ENCODE measurements at regions of chr13 and their contacts with region 1.

Region 1: DNA sequence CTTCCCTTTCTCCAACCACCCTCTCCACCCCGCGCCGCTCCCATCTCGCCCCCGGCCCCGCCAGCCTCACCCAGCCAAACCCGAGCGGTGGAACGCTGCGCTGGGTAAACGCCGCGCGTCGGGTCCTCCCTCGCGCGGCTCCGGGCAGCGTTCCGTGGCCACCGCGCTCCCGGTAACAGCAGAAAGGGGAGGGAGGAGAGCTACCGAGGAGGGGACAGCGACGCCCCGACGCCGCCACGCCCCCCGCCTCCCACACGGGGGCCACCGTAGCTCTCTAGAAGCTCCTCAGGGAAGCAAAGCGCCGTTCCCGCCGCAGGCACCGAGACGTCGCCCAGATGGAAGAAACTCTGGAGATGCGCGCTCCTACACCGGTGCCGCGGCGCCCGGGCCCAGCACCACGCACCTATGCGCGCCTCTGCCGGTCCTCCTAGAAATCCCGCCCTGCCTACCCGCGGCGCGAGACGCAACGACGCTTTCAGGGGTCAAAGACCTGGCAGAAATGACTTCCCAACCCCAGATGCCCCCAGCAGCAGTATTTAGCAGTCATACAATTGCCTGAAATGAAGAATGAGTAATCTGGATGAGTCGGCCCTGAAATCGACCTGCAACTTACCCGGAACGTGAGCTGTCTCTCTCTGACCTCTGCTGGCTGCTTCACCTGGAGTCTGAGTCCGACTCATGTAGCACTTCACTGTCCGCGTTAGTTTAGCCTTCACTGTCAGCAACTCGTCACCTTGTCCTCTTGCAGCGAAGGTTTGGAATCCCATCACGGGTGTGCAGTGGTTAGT is at the start of gene RUBCNL:
- DNase-seq: peak in 2 of 4 experiments; percentile 8 to 13
- ATAC-seq: peak; percentile 38; the same call in 2 of the 3 replicates
- H3K4me3 ChIP-seq: no peak within 1 kb of the TSS
- H3K27ac ChIP-seq: no peak within 1 kb of the TSS
- H3K4me1 ChIP-seq: peaks cover 0 to 6% of the 10 kb centered on the region in 2 experiments; a peak in 2 of 5 replicates
- H3K27me3 ChIP-seq: peaks cover 16 to 23% of the 10 kb centered on the region in 2 experiments; a peak in 4 of 5 replicates
- CTCF ChIP-seq: no peak
- EP300 ChIP-seq: no peak
- POLR2A ChIP-seq: no peak
- RAD21 ChIP-seq: no peak
- polyA plus RNA-seq, gene RUBCNL: 0.08 TPM

Region 2: GRCh38 chr13:46463719-46464118 is 76.5 kb after region 1 on chr13:
- CTCF ChIA-PET with region 1: no interaction called
- POLR2A ChIA-PET with region 1: no interaction called
- in situ Hi-C with region 1: no loop called
- intact Hi-C with region 1: loop called (anchors 10 kb)
- DNase-seq: no peak
- ATAC-seq: no peak
- H3K4me3 ChIP-seq: no peak overlapping the region
- H3K27ac ChIP-seq: no peak overlapping the region
- H3K4me1 ChIP-seq: no peaks in the 10 kb centered on the region; a peak in 1 of 5 replicates
- H3K27me3 ChIP-seq: no peaks in the 10 kb centered on the region
- CTCF ChIP-seq: no peak
- EP300 ChIP-seq: no peak
- POLR2A ChIP-seq: no peak
- RAD21 ChIP-seq: no peak

Region 3: GRCh38 chr13:46492946-46493345 is 105.7 kb after region 1 on chr13:
- CTCF ChIA-PET with region 1: no interaction called
- POLR2A ChIA-PET with region 1: no interaction called
- in situ Hi-C with region 1: no loop called
- intact Hi-C with region 1: no loop called
- DNase-seq: peak; percentile 13 to 41 (median 16)
- ATAC-seq: no peak
- H3K4me3 ChIP-seq: no peak overlapping the region
- H3K27ac ChIP-seq: no peak overlapping the region
- H3K4me1 ChIP-seq: no peaks in the 10 kb centered on the region
- H3K27me3 ChIP-seq: peaks cover 0 to 9% of the 10 kb centered on the region in 2 experiments; a peak in 1 of 5 replicates
- CTCF ChIP-seq: peak; percentile 19 to 62 (median 40); a peak in 3 of 6 replicates
- EP300 ChIP-seq: no peak
- POLR2A ChIP-seq: no peak
- RAD21 ChIP-seq: peak; percentile 69 to 72

Region 4: GRCh38 chr13:47687577-47687976 is 1300.3 kb after region 1 on chr13:
- CTCF ChIA-PET with region 1: no interaction called
- POLR2A ChIA-PET with region 1: no interaction called
- in situ Hi-C with region 1: no loop called
- intact Hi-C with region 1: no loop called
- DNase-seq: no peak
- ATAC-seq: no peak
- H3K4me3 ChIP-seq: no peak overlapping the region
- H3K27ac ChIP-seq: no peak overlapping the region
- H3K4me1 ChIP-seq: no peaks in the 10 kb centered on the region
- H3K27me3 ChIP-seq: no peaks in the 10 kb centered on the region
- CTCF ChIP-seq: no peak
- EP300 ChIP-seq: no peak
- POLR2A ChIP-seq: no peak
- RAD21 ChIP-seq: no peak